GM18951 (cell line): ENCODE measurements at regions of chr2 and their contacts with region 1.

Region 1: GRCh38 chr2:162890690-162891311 is 52.2 kb upstream of the KCNH7 start:
- POLR2A ChIP-seq: no peak

Region 2: GRCh38 chr2:162327134-162327769 is 563.5 kb before region 1 on chr2:
- in situ Hi-C with region 1: no loop called
- POLR2A ChIP-seq: no peak

Region 3: GRCh38 chr2:163132850-163133249 is 242.0 kb after region 1 on chr2:
- in situ Hi-C with region 1: loop called (anchors 25 kb)
- POLR2A ChIP-seq: no peak

Region 4: GRCh38 chr2:163171786-163172531 is 281.2 kb after region 1 on chr2:
- in situ Hi-C with region 1: no loop called
- POLR2A ChIP-seq: no peak

Region 5: DNA sequence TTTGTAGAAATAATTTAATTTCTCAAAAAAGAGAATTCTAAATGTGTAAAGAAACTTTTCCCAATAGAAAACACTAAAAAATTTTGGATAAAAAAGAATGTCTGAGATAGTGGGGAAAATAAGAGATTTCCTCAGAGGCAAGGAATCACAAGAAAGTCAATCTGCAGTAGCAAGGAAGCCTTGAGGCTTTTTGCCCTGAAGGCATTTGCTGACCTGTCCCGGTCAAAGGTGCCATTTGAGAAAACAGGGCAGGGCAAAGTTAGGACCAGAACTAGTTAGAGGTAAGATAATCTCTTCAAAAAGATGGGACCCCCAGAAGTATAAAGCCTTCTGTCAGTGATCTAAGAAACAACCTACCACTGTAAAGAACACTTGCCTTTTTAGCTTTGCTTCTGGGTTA is 387.4 kb after region 1 on chr2:
- in situ Hi-C with region 1: no loop called
- POLR2A ChIP-seq: no peak